Body of pancreas (tissue), 4 donors: ENCODE measurements at regions of chr14 and their contacts with region 1.

Region 1: GRCh38 chr14:61252369-61253063 is 28.6 kb downstream of the TMEM30B start:
- DNase-seq: peak; percentile 74 to 85 (median 78)
- ATAC-seq: peak; percentile 94
- H3K4me3 ChIP-seq: no peak overlapping the region
- H3K27ac ChIP-seq: no peak overlapping the region
- H3K4me1 ChIP-seq: peaks cover 5% of the 10 kb centered on the region
- H3K27me3 ChIP-seq: no peaks in the 10 kb centered on the region
- CTCF ChIP-seq: peak; percentile 57 to 92 (median 85)
- POLR2A ChIP-seq: no peak

Region 2: DNA sequence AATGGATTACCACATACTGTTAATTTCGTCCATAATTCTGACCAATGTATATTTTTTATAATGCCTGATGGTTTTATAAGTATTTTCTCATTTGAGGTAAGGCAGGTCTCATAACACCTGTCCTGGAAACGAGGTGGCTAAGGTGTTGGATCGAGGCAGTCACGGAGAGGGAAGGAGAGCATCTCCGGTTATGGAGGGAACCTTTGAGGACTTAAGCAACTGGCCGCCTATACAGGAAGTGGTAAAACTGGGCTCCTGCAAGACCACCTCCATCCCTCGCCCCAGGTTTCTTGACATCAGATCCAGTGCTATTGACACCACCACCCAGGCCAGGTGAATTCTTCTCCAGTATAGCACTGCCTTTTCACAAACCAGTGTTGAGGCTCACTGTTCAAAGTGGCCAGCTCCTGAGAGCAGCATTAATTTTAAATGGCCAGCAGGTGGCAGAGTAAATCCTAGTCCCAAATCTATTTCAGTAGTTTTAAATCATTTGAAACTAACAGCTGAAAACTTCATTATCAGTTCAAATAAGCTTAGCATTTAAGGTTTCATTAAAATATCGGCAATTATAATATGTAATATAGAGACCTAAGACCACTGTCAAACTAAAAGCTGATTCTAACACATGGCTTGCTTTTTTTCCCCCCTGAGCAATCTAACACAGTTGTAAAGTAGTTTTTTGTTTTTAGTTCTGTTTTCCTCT is 902.7 kb before region 1 on chr14:
- intact Hi-C with region 1: loop called (anchors 10 kb)
- DNase-seq: peak; percentile 32 to 49 (median 36)
- ATAC-seq: peak; percentile 64
- H3K4me3 ChIP-seq: no peak overlapping the region
- H3K27ac ChIP-seq: no peak overlapping the region
- H3K4me1 ChIP-seq: peaks cover 8% of the 10 kb centered on the region
- H3K27me3 ChIP-seq: no peaks in the 10 kb centered on the region
- CTCF ChIP-seq: peak; percentile 45 to 73 (median 59)
- POLR2A ChIP-seq: no peak

Region 3: DNA sequence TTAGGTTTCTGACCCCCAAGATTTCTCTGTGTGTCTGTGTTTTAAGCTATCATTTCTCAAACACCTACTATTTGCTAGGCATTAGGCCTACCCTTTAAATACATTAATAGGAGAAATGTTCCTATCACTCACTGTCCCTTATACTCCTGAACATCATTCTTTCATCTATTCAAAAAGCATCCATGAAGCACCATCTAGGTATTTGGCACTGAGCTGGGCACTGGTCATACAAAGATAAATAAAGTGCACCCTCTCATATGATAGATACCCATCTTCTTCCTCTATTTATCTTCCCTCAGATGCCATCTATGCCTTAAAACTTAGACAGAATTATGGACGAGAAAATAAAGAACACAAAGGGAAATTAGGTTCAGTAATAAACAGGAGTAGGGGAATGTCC is 623.6 kb before region 1 on chr14:
- intact Hi-C with region 1: loop called (anchors 5 kb)
- DNase-seq: no peak
- ATAC-seq: no peak
- H3K4me3 ChIP-seq: no peak overlapping the region
- H3K27ac ChIP-seq: no peak overlapping the region
- H3K4me1 ChIP-seq: peaks cover 9% of the 10 kb centered on the region
- H3K27me3 ChIP-seq: no peaks in the 10 kb centered on the region
- CTCF ChIP-seq: no peak
- POLR2A ChIP-seq: no peak